Keratinocyte (primary cell): ENCODE measurements at regions of chr21 and their contacts with region 1.

Region 1: DNA sequence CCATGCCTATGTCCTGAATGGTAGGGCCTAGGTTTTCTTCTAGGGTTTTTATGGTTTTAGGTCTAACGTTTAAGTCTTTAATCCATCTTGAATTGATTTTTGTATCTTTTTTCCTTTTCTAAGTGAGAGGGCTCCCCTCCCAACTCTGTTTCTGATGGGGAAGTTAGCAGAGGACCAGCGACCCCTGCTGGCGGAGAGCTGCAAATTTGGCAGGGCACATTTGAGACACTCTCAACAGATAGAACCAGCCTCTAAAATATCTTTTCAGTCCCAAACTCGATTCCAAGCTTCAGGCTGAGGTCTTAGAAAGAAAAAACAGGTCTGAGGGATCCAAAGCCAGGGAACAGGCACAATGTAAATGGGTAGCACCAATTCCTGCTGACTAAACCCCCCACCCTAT is 32.5 kb downstream of the LRRC3 start:
- DNase-seq: no peak
- H3K4me3 ChIP-seq: no peak overlapping the region
- H3K27ac ChIP-seq: no peak overlapping the region
- H3K4me1 ChIP-seq: no peaks in the 10 kb centered on the region
- H3K27me3 ChIP-seq: no peaks in the 10 kb centered on the region
- CTCF ChIP-seq: peak; percentile 40 to 63 (median 47)

Region 2: GRCh38 chr21:44742418-44743153 is 254.8 kb after region 1 on chr21:
- dilution Hi-C with region 1: loop called (anchors 25 kb)
- DNase-seq: no peak
- H3K4me3 ChIP-seq: no peak overlapping the region
- H3K27ac ChIP-seq: no peak overlapping the region
- H3K4me1 ChIP-seq: no peaks in the 10 kb centered on the region
- H3K27me3 ChIP-seq: no peaks in the 10 kb centered on the region
- CTCF ChIP-seq: peak in 2 of 3 experiments; percentile 14 to 28